Stomach (tissue), 19 donors: ENCODE measurements at regions of chr14 and their contacts with region 1.

Region 1: GRCh38 chr14:89915114-89915878 is 39.2 kb downstream of the EFCAB11 start:
- DNase-seq: peak; percentile 67 to 84
- H3K4me3 ChIP-seq: no peak overlapping the region
- H3K27ac ChIP-seq: no peak overlapping the region
- H3K4me1 ChIP-seq: peaks cover 8 to 28% (median 12%) of the 10 kb centered on the region in 4 donors
- H3K27me3 ChIP-seq: no peaks in the 10 kb centered on the region
- CTCF ChIP-seq: peak in 6 of 7 experiments; percentile 37 to 94 (median 87)
- EP300 ChIP-seq: no peak
- POLR2A ChIP-seq: no peak

Region 2: GRCh38 chr14:89027097-89027740 is 888.1 kb before region 1 on chr14:
- intact Hi-C with region 1: loop called (anchors 5 kb)
- DNase-seq: peak; percentile 61 to 88
- H3K4me3 ChIP-seq: peak overlapping the region; percentile 49 to 71 (median 56)
- H3K27ac ChIP-seq: peak overlapping the region in 1 of 5 donors; percentile 21
- H3K4me1 ChIP-seq: peaks cover 13 to 21% (median 14%) of the 10 kb centered on the region in 4 donors
- H3K27me3 ChIP-seq: peaks cover 0 to 56% (median 10%) of the 10 kb centered on the region in 3 donors
- CTCF ChIP-seq: peak in 5 of 7 experiments; percentile 46 to 97 (median 81)
- EP300 ChIP-seq: no peak
- POLR2A ChIP-seq: no peak

Region 3: DNA sequence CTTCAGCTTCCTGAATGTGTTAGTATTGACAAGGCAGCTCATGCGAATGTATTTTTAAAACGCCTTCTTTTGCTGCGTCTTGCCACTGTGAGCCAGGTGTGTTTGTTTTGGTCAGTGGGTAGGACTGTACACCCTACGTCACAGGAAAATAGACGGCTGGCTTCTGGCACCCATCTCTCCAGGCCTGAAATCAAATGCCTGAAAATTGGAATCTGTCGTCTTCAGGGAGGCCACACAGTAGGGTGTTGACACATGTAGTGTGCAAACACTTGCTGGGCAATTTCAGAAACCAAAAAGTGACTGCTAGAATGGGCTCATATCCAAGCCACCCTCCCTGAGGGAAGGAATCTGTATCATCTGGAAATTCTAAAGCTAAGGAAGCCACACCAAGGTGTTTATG is 881.5 kb before region 1 on chr14:
- intact Hi-C with region 1: loop called (anchors 5 kb)
- DNase-seq: peak in 1 of 2 donors; percentile 51
- H3K4me3 ChIP-seq: no peak overlapping the region
- H3K27ac ChIP-seq: no peak overlapping the region
- H3K4me1 ChIP-seq: no peaks in the 10 kb centered on the region
- H3K27me3 ChIP-seq: peaks cover 0 to 21% (median 0%) of the 10 kb centered on the region in 3 donors
- CTCF ChIP-seq: no peak
- EP300 ChIP-seq: no peak
- POLR2A ChIP-seq: no peak

Region 4: GRCh38 chr14:90235179-90235976 is 320.1 kb after region 1 on chr14:
- intact Hi-C with region 1: no loop called
- DNase-seq: peak; percentile 76
- H3K4me3 ChIP-seq: no peak overlapping the region
- H3K27ac ChIP-seq: no peak overlapping the region
- H3K4me1 ChIP-seq: peaks cover 0 to 8% (median 2%) of the 10 kb centered on the region in 4 donors
- H3K27me3 ChIP-seq: peaks cover 0 to 23% (median 0%) of the 10 kb centered on the region in 3 donors
- CTCF ChIP-seq: peak in 5 of 7 experiments; percentile 86 to 96 (median 90)
- EP300 ChIP-seq: no peak
- POLR2A ChIP-seq: no peak